ENCODE measurements at regions of chr1 and their contacts with region 1.

Region 1: GRCh38 chr1:117059678-117060440 is at the start of gene TTF2:
- DNase-seq: peak; percentile 82 to 99 (median 98)
- ATAC-seq: peak; percentile 96
- H3K4me3 ChIP-seq: peak within 1 kb of the TSS; percentile 81
- H3K4me3 Mint-ChIP-seq: no peak within 1 kb of the TSS
- H3K27ac ChIP-seq: peak within 1 kb of the TSS; percentile 82
- H3K27ac Mint-ChIP-seq: peak within 1 kb of the TSS in 4 of 9 donors; percentile 45 to 83 (median 62)
- H3K4me1 ChIP-seq: peaks cover 6 to 9% of the 10 kb centered on the region in 2 donors
- H3K4me1 Mint-ChIP-seq: peaks cover 19 to 60% (median 41%) of the 10 kb centered on the region in 7 donors
- H3K27me3 ChIP-seq: no peaks in the 10 kb centered on the region
- H3K27me3 Mint-ChIP-seq: no peaks in the 10 kb centered on the region
- total RNA-seq, gene TTF2: 27.6 to 74.4 (median 35.2) TPM

Region 2: GRCh38 chr1:116504308-116505156 is 555.3 kb before region 1 on chr1:
- CTCF ChIA-PET with region 1: no interaction called
- POLR2A ChIA-PET with region 1: no interaction called
- intact Hi-C with region 1: loop called (anchors 2 to 10 kb)
- DNase-seq: peak; percentile 49 to 86 (median 73)
- ATAC-seq: peak; percentile 96
- H3K4me3 ChIP-seq: peak overlapping the region; percentile 1
- H3K4me3 Mint-ChIP-seq: peak overlapping the region in 8 of 10 donors; percentile 11 to 77 (median 48)
- H3K27ac ChIP-seq: peak overlapping the region; percentile 48
- H3K27ac Mint-ChIP-seq: peak overlapping the region; percentile 65 to 92 (median 77)
- H3K4me1 ChIP-seq: peaks cover 20 to 49% of the 10 kb centered on the region in 2 donors
- H3K4me1 Mint-ChIP-seq: peaks cover 21 to 89% (median 34%) of the 10 kb centered on the region in 7 donors
- H3K27me3 ChIP-seq: no peaks in the 10 kb centered on the region
- H3K27me3 Mint-ChIP-seq: no peaks in the 10 kb centered on the region

Region 3: DNA sequence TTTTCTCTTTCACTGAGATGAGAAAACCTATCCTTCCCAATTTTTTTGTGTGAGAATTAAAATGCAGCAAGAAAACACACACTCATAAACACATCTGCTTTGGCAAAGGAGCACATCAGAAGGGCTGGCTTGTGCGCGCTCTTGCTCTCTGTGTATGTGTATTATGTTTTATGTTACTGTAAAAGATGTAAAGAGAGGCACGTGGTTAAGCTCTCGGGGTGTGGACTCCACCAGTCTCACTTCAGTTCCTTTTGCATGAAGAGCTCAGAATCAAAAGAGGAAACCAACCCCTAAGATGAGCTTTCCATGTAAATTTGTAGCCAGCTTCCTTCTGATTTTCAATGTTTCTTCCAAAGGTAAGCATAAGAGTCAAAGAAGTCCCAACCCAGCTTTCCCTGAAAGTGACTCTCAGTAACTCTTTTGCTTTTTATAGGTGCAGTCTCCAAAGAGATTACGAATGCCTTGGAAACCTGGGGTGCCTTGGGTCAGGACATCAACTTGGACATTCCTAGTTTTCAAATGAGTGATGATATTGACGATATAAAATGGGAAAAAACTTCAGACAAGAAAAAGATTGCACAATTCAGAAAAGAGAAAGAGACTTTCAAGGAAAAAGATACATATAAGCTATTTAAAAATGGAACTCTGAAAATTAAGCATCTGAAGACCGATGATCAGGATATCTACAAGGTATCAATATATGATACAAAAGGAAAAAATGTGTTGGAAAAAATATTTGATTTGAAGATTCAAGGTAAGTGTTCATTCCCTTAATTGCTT is 305.5 kb before region 1 on chr1 and contains the start of gene CD2:
- CTCF ChIA-PET with region 1: interaction called, 3 read pairs
- POLR2A ChIA-PET with region 1: interaction called, 10 read pairs
- intact Hi-C with region 1: loop called in 1 of 2 experiments (anchors 1 kb)
- DNase-seq: peak in 7 of 9 donors; percentile 58 to 79 (median 71)
- ATAC-seq: peak; percentile 91
- H3K4me3 ChIP-seq: peak within 1 kb of the TSS; percentile 90
- H3K4me3 Mint-ChIP-seq: peak within 1 kb of the TSS; percentile 91 to 100 (median 98)
- H3K27ac ChIP-seq: peak within 1 kb of the TSS; percentile 89
- H3K27ac Mint-ChIP-seq: peak within 1 kb of the TSS; percentile 93 to 99 (median 97)
- H3K4me1 ChIP-seq: peaks cover 27 to 31% of the 10 kb centered on the region in 2 donors
- H3K4me1 Mint-ChIP-seq: peaks cover 25 to 47% (median 43%) of the 10 kb centered on the region in 7 donors
- H3K27me3 ChIP-seq: no peaks in the 10 kb centered on the region
- H3K27me3 Mint-ChIP-seq: no peaks in the 10 kb centered on the region
- total RNA-seq, gene CD2: 105 to 307 (median 174) TPM

Region 4: DNA sequence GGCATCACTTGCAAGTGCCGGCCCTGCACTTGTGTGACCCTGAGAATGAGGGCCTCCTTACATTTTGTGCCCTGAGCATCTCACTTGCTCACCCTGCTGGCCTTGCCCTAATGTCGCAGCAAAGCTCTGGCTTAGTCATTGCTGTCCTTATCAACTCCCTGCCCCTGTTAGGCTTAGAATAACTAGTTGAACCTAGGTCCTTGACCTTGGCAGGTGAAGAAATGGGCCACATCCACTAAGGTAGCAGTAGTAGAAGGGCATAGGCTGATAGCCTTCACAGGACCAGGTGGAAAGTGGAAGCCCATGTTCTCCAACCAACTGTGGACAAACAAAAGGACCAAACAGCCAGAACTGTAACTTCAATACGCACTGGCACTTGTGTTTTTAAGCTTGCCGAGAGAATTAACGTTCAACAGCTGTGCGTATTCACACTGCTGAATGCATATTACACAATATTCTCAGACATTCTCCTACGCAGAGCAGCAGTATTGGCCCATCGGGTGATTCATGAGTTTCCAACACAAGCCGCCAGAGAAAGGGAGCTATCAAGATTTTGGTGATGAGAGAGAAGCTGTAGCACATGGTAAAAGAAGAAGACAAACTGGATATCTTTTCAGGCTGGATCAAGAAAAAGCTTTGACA is 177.9 kb before region 1 on chr1:
- CTCF ChIA-PET with region 1: interaction called, 4 read pairs
- POLR2A ChIA-PET with region 1: interaction called, 7 read pairs
- intact Hi-C with region 1: loop called in 1 of 2 experiments (anchors 1 kb)
- DNase-seq: peak in 3 of 9 donors; percentile 14 to 40 (median 19)
- ATAC-seq: no peak
- H3K4me3 ChIP-seq: no peak overlapping the region
- H3K4me3 Mint-ChIP-seq: no peak overlapping the region
- H3K27ac ChIP-seq: no peak overlapping the region
- H3K27ac Mint-ChIP-seq: peak overlapping the region in 2 of 9 donors; percentile 44 to 60
- H3K4me1 ChIP-seq: peaks cover 11 to 20% of the 10 kb centered on the region in 2 donors
- H3K4me1 Mint-ChIP-seq: peaks cover 0 to 26% (median 0%) of the 10 kb centered on the region in 7 donors
- H3K27me3 ChIP-seq: no peaks in the 10 kb centered on the region
- H3K27me3 Mint-ChIP-seq: no peaks in the 10 kb centered on the region

Region 5: DNA sequence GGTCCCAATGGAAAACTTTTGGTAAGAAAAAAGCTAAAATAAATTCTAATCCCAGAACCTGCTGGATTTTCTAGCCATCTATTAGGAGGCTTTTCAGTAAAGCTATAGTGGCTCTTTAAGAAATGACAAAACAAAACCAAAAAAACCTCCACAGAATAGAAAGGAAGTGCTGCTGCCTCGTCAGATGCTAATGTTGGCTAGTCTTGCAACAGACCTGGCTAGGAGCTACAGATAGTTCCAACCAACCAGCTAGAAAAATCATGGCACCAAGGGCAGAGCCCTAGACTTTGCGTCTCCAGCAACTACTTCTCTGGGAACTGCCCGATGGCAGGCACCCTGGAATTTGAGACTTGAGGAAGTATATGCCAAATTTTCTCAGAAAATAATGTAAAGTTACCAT is 50.7 kb before region 1 on chr1:
- CTCF ChIA-PET with region 1: interaction called, 3 read pairs
- POLR2A ChIA-PET with region 1: interaction called, 15 read pairs
- intact Hi-C with region 1: no loop called
- DNase-seq: peak in 6 of 9 donors; percentile 27 to 55 (median 44)
- ATAC-seq: peak; percentile 70
- H3K4me3 ChIP-seq: no peak overlapping the region
- H3K4me3 Mint-ChIP-seq: peak overlapping the region; percentile 42 to 85 (median 73)
- H3K27ac ChIP-seq: peak overlapping the region; percentile 42
- H3K27ac Mint-ChIP-seq: peak overlapping the region; percentile 72 to 96 (median 92)
- H3K4me1 ChIP-seq: peaks cover 0 to 44% of the 10 kb centered on the region in 2 donors
- H3K4me1 Mint-ChIP-seq: peaks cover 31 to 86% (median 65%) of the 10 kb centered on the region in 7 donors
- H3K27me3 ChIP-seq: no peaks in the 10 kb centered on the region
- H3K27me3 Mint-ChIP-seq: no peaks in the 10 kb centered on the region

Region 6: GRCh38 chr1:117654493-117655219 is 594.8 kb after region 1 on chr1:
- CTCF ChIA-PET with region 1: no interaction called
- POLR2A ChIA-PET with region 1: no interaction called
- intact Hi-C with region 1: loop called in 1 of 2 experiments (anchors 2 kb)
- DNase-seq: peak in 3 of 9 donors; percentile 31 to 47 (median 37)
- ATAC-seq: no peak
- H3K4me3 ChIP-seq: peak overlapping the region; percentile 2
- H3K4me3 Mint-ChIP-seq: peak overlapping the region; percentile 58 to 81 (median 70)
- H3K27ac ChIP-seq: no peak overlapping the region
- H3K27ac Mint-ChIP-seq: peak overlapping the region in 7 of 9 donors; percentile 33 to 93 (median 84)
- H3K4me1 ChIP-seq: peaks cover 65 to 92% of the 10 kb centered on the region in 2 donors
- H3K4me1 Mint-ChIP-seq: peaks cover 68 to 83% (median 78%) of the 10 kb centered on the region in 7 donors
- H3K27me3 ChIP-seq: no peaks in the 10 kb centered on the region
- H3K27me3 Mint-ChIP-seq: peaks cover 0 to 45% (median 14%) of the 10 kb centered on the region in 5 donors